PC-3 (cell line): ENCODE measurements at regions of chr3 and their contacts with region 1.

Region 1: DNA sequence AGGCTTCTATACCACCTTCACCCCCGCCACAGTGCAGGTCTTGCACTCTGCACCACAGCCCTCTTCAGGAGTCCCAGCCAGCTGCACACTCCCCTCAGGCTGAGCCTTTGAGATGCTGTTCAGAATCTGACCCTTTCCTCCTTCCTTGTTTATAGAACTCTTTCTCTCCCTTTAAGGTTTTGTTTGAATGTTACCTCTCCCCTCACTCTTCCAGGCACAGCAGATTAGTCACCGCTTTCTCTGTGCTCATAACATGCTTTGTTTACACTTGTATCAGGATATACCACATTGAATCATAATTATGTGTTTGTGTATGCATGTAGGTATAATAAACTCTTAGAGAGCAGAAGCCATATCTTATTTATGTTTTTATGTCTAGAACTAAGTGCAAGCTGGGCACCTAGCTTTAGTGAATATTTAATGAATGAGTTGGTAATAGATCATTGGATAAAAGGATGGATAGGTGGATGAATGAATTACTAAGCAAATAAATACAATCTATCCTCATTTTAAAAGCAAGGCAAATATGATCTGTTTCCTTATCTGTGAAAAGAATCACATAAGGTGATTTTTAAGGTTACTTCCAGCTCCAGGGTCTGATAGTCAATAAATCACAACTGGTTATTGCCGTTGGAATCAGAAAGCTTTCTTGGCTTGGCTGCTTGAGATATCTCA is 168.5 kb upstream of the BCL6 start:
- DNase-seq: peak; percentile 93
- ATAC-seq: peak; percentile 88
- H3K4me3 ChIP-seq: peak overlapping the region; percentile 47
- H3K27ac ChIP-seq: peak overlapping the region; percentile 91
- H3K4me1 ChIP-seq: peaks cover 48% of the 10 kb centered on the region
- H3K27me3 ChIP-seq: no peaks in the 10 kb centered on the region
- CTCF ChIP-seq: no peak

Region 2: GRCh38 chr3:187809617-187809991 is 104.2 kb before region 1 on chr3:
- CTCF ChIA-PET with region 1: no interaction called
- POLR2A ChIA-PET with region 1: interaction called, 5 read pairs
- intact Hi-C with region 1: loop called (anchors 1 kb)
- DNase-seq: no peak
- ATAC-seq: no peak
- H3K4me3 ChIP-seq: peak overlapping the region; percentile 59; the same call in 1 of the 2 replicates
- H3K27ac ChIP-seq: peak overlapping the region; percentile 74
- H3K4me1 ChIP-seq: peaks cover 40% of the 10 kb centered on the region
- H3K27me3 ChIP-seq: no peaks in the 10 kb centered on the region
- CTCF ChIP-seq: no peak

Region 3: DNA sequence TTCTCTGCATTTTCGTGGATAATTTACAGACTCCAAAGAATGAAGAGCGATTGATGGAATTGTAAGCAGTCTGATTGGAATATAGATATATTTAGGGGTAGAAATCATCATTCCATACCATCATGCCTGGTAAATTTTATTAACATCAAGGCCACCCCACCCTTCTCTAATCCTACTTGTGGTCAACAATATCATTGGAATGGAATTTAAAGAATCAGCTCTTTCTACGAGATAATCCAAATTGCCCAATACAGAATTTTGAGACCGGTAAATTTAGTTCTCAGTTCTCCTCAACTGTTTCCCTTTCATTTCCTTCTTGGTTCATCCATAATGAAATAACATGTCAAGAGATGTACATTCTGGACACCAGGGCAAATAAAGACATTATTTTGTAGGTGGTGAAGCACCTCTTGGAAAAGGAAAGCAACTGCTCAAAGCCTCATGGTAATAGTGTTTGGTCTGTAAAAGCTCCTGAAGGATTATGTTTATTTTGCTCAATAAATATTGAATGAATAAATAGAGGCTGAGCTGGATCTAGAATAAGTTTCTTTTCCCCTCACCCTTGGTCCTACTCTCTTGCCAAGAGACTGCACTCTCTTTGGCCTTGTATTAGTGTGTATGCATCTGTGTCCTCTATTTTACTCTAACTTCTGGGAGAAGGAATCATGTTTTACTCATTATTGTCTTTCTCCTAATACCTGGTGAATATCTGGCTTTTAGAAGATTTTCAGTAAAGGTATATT is 34.8 kb before region 1 on chr3:
- CTCF ChIA-PET with region 1: no interaction called
- POLR2A ChIA-PET with region 1: no interaction called
- intact Hi-C with region 1: loop called (anchors 1 kb)
- DNase-seq: peak; percentile 87
- ATAC-seq: peak; percentile 89
- H3K4me3 ChIP-seq: peak overlapping the region; percentile 54
- H3K27ac ChIP-seq: peak overlapping the region; percentile 56
- H3K4me1 ChIP-seq: peaks cover 40% of the 10 kb centered on the region
- H3K27me3 ChIP-seq: no peaks in the 10 kb centered on the region
- CTCF ChIP-seq: no peak

Region 4: GRCh38 chr3:187943679-187944390 is 30.1 kb after region 1 on chr3:
- CTCF ChIA-PET with region 1: interaction called, 3 read pairs
- POLR2A ChIA-PET with region 1: interaction called, 4 read pairs
- intact Hi-C with region 1: loop called (anchors 2 kb)
- DNase-seq: peak; percentile 85
- ATAC-seq: peak; percentile 87
- H3K4me3 ChIP-seq: peak overlapping the region; percentile 57
- H3K27ac ChIP-seq: peak overlapping the region; percentile 80
- H3K4me1 ChIP-seq: peaks cover 44% of the 10 kb centered on the region
- H3K27me3 ChIP-seq: no peaks in the 10 kb centered on the region
- CTCF ChIP-seq: no peak

Region 5: DNA sequence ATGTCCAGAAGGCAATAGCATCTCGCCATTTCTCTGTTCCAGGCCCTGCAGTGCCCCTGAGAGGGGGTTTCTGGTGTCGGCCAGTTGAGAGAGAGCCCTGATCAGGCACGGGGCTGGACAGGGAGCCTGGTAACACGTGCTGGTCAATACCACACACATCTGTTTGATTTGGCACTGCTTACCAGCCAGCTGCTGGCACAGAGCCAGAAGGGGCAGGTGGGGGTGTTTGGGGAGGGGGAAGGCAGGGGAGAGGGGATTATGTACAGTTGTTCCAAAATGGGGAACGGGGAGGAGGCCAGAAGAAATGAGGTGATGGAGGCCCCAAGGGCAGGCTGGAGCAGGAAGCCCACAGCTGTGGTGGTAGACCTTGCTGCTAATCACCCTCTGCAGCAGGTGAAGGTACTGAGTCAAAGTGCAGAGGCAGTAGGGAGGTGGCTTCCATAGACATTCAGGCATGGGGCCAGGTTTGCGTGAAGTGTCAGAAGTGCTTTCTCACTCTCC is 86.7 kb after region 1 on chr3:
- CTCF ChIA-PET with region 1: no interaction called
- POLR2A ChIA-PET with region 1: no interaction called
- intact Hi-C with region 1: loop called (anchors 5 kb)
- DNase-seq: no peak
- ATAC-seq: no peak
- H3K4me3 ChIP-seq: no peak overlapping the region
- H3K27ac ChIP-seq: no peak overlapping the region
- H3K4me1 ChIP-seq: peaks cover 24% of the 10 kb centered on the region
- H3K27me3 ChIP-seq: no peaks in the 10 kb centered on the region
- CTCF ChIP-seq: no peak

Region 6: DNA sequence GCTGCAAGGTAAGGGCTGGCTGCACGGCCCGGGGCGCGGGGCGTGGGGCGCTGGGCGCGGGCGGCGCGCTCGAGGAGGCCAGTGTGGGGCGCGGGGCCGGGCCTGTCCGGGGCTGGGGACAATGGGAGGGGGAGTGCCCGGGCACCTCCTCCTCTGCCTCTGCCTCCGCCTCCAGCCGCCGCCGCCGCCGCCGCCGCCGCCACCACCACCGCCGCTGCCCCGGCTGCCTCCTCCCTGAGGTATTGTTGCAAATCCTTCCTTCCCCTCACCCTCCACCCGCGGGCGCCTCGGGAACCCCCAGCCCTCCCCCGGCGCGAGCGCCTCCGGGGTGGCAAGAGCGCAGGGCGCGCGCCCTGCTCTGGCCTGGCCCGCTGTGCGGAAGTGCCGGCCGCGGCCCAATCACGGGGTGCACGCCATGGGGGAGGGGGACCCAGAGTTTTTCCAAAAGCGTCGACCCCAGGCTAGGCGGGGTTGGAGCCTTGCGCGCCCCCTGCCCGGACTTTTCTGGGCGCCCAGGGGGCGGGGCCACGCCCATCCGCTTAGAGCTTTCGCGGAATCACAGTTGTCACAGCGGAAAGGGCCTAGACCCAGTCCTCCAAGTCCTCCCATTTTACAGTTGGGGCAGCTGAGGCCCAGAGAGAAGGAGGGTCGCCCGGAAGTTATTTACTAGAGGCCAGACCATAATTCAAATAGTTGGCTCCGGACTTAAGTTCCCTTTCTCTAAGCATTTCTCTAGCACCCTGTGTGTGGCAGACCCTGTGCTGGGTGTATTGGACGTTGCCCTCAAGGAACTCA is 240.5 kb after region 1 on chr3 and contains the start of gene LPP:
- CTCF ChIA-PET with region 1: interaction called, 3 read pairs
- POLR2A ChIA-PET with region 1: no interaction called
- intact Hi-C with region 1: loop called (anchors 5 kb)
- DNase-seq: peak; percentile 58
- ATAC-seq: peak; percentile 82
- H3K4me3 ChIP-seq: peak within 1 kb of the TSS; percentile 97
- H3K27ac ChIP-seq: peak within 1 kb of the TSS; percentile 88
- H3K4me1 ChIP-seq: peaks cover 29% of the 10 kb centered on the region
- H3K27me3 ChIP-seq: no peaks in the 10 kb centered on the region
- CTCF ChIP-seq: 0 out of 2 replicates have a peak, but pooled peaks have one; percentile 14
- total RNA-seq, gene LPP: 20.4 and 21.3 TPM in 2 replicates

Region 7: GRCh38 chr3:188220988-188221818 is 307.4 kb after region 1 on chr3:
- CTCF ChIA-PET with region 1: no interaction called
- POLR2A ChIA-PET with region 1: interaction called, 14 read pairs
- intact Hi-C with region 1: loop called (anchors 10 kb)
- DNase-seq: peak; percentile 31
- ATAC-seq: no peak
- H3K4me3 ChIP-seq: no peak overlapping the region
- H3K27ac ChIP-seq: no peak overlapping the region
- H3K4me1 ChIP-seq: no peaks in the 10 kb centered on the region
- H3K27me3 ChIP-seq: no peaks in the 10 kb centered on the region
- CTCF ChIP-seq: no peak